A673 (cell line): ENCODE measurements at regions of chr13 and their contacts with region 1.

Region 1: GRCh38 chr13:46185634-46186033 is 3.7 kb upstream of the LCP1 start:
- DNase-seq: no peak
- H3K4me3 ChIP-seq: no peak overlapping the region
- H3K27ac ChIP-seq: no peak overlapping the region
- H3K4me1 ChIP-seq: peaks cover 16% of the 10 kb centered on the region
- H3K27me3 ChIP-seq: no peaks in the 10 kb centered on the region
- CTCF ChIP-seq: no peak

Region 2: GRCh38 chr13:46224866-46225265 is 39.2 kb after region 1 on chr13:
- CTCF ChIA-PET with region 1: no interaction called
- POLR2A ChIA-PET with region 1: no interaction called
- intact Hi-C with region 1: loop called (anchors 1 kb)
- DNase-seq: no peak
- H3K4me3 ChIP-seq: no peak overlapping the region
- H3K27ac ChIP-seq: no peak overlapping the region
- H3K4me1 ChIP-seq: no peaks in the 10 kb centered on the region
- H3K27me3 ChIP-seq: no peaks in the 10 kb centered on the region
- CTCF ChIP-seq: no peak